Tibial artery (tissue), 4 donors: ENCODE measurements at regions of chr17 and their contacts with region 1.

Region 1: GRCh38 chr17:27455914-27456680 is at the start of gene KSR1:
- DNase-seq: peak; percentile 79 to 88
- H3K4me3 ChIP-seq: peak within 1 kb of the TSS; percentile 83 to 95
- H3K27ac ChIP-seq: peak within 1 kb of the TSS; percentile 87 to 95
- H3K4me1 ChIP-seq: peaks cover 0 to 25% (median 18%) of the 10 kb centered on the region in 4 donors
- H3K27me3 ChIP-seq: no peaks in the 10 kb centered on the region
- CTCF ChIP-seq: peak; percentile 5 to 8

Region 2: GRCh38 chr17:27353461-27354050 is 102.5 kb before region 1 on chr17:
- intact Hi-C with region 1: loop called (anchors 5 kb)
- DNase-seq: peak; percentile 90 to 97
- H3K4me3 ChIP-seq: peak overlapping the region; percentile 67 to 87
- H3K27ac ChIP-seq: peak overlapping the region; percentile 96 to 97
- H3K4me1 ChIP-seq: peaks cover 0 to 23% (median 16%) of the 10 kb centered on the region in 4 donors
- H3K27me3 ChIP-seq: no peaks in the 10 kb centered on the region
- CTCF ChIP-seq: peak; percentile 95 to 99